ENCODE measurements at regions of chr21 and their contacts with region 1.

Region 1: DNA sequence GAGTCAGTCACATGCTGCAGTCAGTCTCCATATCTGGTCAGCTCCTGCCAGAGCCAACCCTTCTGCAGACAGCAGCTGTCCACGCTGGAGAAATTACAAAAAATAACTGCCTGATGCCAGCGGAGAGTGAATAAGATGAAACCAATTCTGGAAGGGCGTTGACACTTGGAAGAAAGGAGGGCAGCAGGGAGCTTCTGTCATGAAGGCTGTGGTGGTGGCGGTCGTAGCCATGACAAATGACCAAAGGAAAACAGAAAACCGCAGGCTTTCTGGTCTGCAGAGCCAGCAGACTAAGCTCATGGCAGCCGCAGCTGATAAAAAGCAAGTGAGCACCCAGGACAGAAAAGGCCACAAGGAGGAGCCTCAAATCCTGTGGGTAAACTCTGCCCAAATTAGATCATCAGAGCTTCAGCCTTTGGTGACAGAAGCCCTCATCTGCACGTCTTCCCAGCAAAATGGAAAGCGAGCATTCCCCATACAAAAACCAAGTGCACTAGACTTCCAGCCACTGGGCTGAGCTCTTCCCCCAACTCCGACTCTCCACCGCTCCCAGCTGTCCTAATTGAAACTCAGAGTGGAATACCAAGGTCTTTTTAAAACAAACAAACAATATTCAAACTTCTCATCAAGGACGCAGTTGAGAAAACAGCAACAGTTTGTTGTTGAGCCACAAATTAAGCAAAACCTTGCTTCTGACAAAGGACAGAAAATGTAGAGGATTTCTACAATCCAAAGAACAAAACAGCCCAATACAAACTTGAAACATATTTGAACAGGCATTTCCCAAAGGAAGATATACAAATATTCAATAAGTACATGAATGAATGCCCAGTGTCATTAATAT is 28.7 kb downstream of the RSPH1 start:
- DNase-seq: peak in 2 of 10 donors; percentile 15 to 23
- H3K4me3 ChIP-seq: no peak overlapping the region
- H3K27ac ChIP-seq: no peak overlapping the region
- H3K27me3 ChIP-seq: no peaks in the 10 kb centered on the region
- CTCF ChIP-seq: peak in 30 of 56 donors; percentile 4 to 39 (median 24)

Region 2: GRCh38 chr21:42309753-42310221 is 157.6 kb before region 1 on chr21:
- intact Hi-C with region 1: loop called in 1 of 2 experiments (anchors 10 kb)
- DNase-seq: peak in 7 of 10 donors; percentile 40 to 75 (median 58)
- H3K4me3 ChIP-seq: peak overlapping the region in 33 of 59 donors; percentile 5 to 54 (median 29)
- H3K27ac ChIP-seq: peak overlapping the region in 2 of 59 donors; percentile 3 to 36
- H3K27me3 ChIP-seq: peaks cover 0 to 6% (median 0%) of the 10 kb centered on the region in 45 donors
- CTCF ChIP-seq: peak; percentile 32 to 86 (median 77)

Measured in dorsolateral prefrontal cortex (tissue), 120 donors.